ENCODE measurements at regions of chr17 and their contacts with region 1.

Region 1: DNA sequence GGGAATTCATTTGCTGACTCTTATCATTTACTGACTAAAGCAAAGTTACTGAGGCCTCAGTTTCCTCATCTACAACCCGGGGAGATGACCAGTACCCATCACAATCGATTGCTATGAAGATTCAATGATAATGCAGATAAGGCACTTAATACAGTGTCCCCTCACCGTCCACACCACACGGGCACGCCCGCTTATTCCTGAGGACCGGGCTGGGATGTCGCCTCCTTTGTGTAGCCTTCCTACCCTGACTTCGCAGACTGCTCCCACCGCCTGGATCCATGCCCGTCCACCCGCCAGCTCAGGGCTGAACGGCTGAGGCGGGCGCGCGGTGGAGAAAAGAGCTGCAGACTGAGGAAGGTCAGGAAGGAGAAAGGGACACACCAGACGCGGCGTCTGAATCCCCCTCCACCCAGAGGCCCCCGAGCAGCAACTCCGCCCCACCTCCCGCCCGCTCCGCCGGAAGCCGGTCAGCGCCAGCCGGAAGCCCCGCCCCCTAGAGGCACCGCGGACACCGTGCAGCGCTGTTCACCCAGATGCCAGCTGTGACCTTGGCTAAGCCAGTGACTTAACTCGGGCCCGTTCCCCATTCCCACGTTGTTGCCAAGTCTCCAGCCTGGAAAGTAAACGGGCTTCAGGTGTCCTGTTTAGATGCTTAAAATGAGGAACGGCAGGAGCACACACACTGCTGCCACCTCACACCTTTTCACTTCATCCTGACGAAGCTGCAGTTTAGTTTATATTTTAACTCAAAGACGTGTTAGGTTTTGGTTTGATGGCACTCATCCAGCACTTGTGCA is at the start of gene KRABD2:
- DNase-seq: peak; percentile 80 to 87 (median 83)
- ATAC-seq: peak; percentile 98
- H3K4me3 ChIP-seq: peak within 1 kb of the TSS; percentile 37
- H3K27ac ChIP-seq: peak within 1 kb of the TSS; percentile 50
- H3K4me1 ChIP-seq: peaks cover 13 to 18% of the 10 kb centered on the region in 2 experiments
- H3K27me3 ChIP-seq: no peaks in the 10 kb centered on the region
- CTCF ChIP-seq: peak; percentile 49 to 70 (median 56)
- EP300 ChIP-seq: no peak
- POLR2A ChIP-seq: peak; percentile 87
- RAD21 ChIP-seq: no peak

Region 2: GRCh38 chr17:8314797-8315763 is 61.4 kb before region 1 on chr17:
- CTCF ChIA-PET with region 1: no interaction called
- POLR2A ChIA-PET with region 1: no interaction called
- in situ Hi-C with region 1: no loop called
- intact Hi-C with region 1: loop called (anchors 5 kb)
- DNase-seq: no peak
- ATAC-seq: no peak
- H3K4me3 ChIP-seq: no peak overlapping the region
- H3K27ac ChIP-seq: no peak overlapping the region
- H3K4me1 ChIP-seq: peaks cover 0 to 48% of the 10 kb centered on the region in 2 experiments; a peak in 2 of 5 replicates
- H3K27me3 ChIP-seq: peaks cover 16 to 55% of the 10 kb centered on the region in 2 experiments; a peak in 4 of 5 replicates
- CTCF ChIP-seq: no peak
- EP300 ChIP-seq: no peak
- POLR2A ChIP-seq: no peak
- RAD21 ChIP-seq: no peak

Region 3: GRCh38 chr17:8359769-8360168 is 16.7 kb before region 1 on chr17:
- CTCF ChIA-PET with region 1: no interaction called
- POLR2A ChIA-PET with region 1: interaction called, 25 read pairs
- in situ Hi-C with region 1: no loop called
- intact Hi-C with region 1: no loop called
- DNase-seq: peak; percentile 38 to 60 (median 44)
- ATAC-seq: peak; percentile 79
- H3K4me3 ChIP-seq: no peak overlapping the region
- H3K27ac ChIP-seq: 0 out of 3 replicates have a peak overlapping the region, but pooled peaks have one; percentile 39
- H3K4me1 ChIP-seq: peaks cover 0 to 30% of the 10 kb centered on the region in 2 experiments; a peak in 4 of 5 replicates
- H3K27me3 ChIP-seq: no peaks in the 10 kb centered on the region
- CTCF ChIP-seq: no peak
- EP300 ChIP-seq: no peak
- POLR2A ChIP-seq: no peak
- RAD21 ChIP-seq: no peak

Region 4: GRCh38 chr17:8393420-8394241 is 17.2 kb after region 1 on chr17:
- CTCF ChIA-PET with region 1: no interaction called
- POLR2A ChIA-PET with region 1: no interaction called
- in situ Hi-C with region 1: no loop called
- intact Hi-C with region 1: no loop called
- DNase-seq: no peak
- ATAC-seq: peak; percentile 23; the same call in 1 of the 3 replicates
- H3K4me3 ChIP-seq: no peak overlapping the region
- H3K27ac ChIP-seq: no peak overlapping the region
- H3K4me1 ChIP-seq: peaks cover 0 to 27% of the 10 kb centered on the region in 2 experiments; a peak in 4 of 5 replicates
- H3K27me3 ChIP-seq: peaks cover 0 to 19% of the 10 kb centered on the region in 2 experiments; a peak in 3 of 5 replicates
- CTCF ChIP-seq: no peak
- EP300 ChIP-seq: no peak
- POLR2A ChIP-seq: no peak
- RAD21 ChIP-seq: no peak

Measured in K562 (cell line).